CD4-positive, alpha-beta memory T cell (primary cell): ENCODE measurements at regions of chr1 and their contacts with region 1.

Region 1: DNA sequence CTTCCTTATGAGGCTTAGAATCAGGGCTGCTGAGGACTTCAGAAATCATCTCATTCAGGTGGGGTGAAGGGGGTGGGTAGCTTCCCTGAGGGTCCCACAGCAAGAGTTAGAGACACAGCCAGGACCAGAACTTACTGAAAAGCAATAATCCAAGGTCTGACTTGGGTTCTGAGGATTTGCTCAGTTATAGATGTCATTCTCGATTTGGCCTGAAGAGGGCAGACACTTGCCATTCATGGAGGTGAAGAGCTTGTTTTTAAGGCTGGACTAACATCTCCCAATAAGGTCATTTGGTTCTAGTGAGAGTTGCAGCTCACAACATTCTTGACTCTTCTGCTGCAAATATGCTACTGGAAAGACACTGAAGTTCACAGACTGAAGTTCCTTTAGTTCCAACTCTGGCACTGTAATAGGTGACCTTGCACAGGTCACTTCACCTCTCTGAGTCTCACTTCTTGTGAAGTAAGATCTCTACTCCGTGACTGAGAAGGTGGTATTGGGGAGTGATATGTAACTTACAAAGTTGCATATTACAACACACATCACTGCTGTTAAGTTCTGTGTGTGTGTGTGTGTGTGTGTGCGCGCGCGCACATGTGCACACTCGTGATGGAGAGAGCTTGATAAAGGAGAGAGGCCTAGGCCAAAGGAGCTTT is 69.8 kb upstream of the DIRAS3 start:
- DNase-seq: peak in 4 of 5 donors; percentile 8 to 17 (median 16)
- H3K4me3 ChIP-seq: no peak overlapping the region
- H3K4me3 Mint-ChIP-seq: no peak overlapping the region
- H3K27ac ChIP-seq: no peak overlapping the region
- H3K27ac Mint-ChIP-seq: no peak overlapping the region
- H3K4me1 ChIP-seq: no peaks in the 10 kb centered on the region
- H3K4me1 Mint-ChIP-seq: peaks cover 3 to 9% (median 5%) of the 10 kb centered on the region in 4 donors
- H3K27me3 ChIP-seq: no peaks in the 10 kb centered on the region
- H3K27me3 Mint-ChIP-seq: peaks cover 0 to 7% of the 10 kb centered on the region in 2 donors

Region 2: GRCh38 chr1:67991546-67991945 is 128.7 kb before region 1 on chr1:
- CTCF ChIA-PET with region 1: no interaction called
- POLR2A ChIA-PET with region 1: no interaction called
- intact Hi-C with region 1: no loop called
- DNase-seq: no peak
- H3K4me3 ChIP-seq: no peak overlapping the region
- H3K4me3 Mint-ChIP-seq: no peak overlapping the region
- H3K27ac ChIP-seq: no peak overlapping the region
- H3K27ac Mint-ChIP-seq: no peak overlapping the region
- H3K4me1 ChIP-seq: no peaks in the 10 kb centered on the region
- H3K4me1 Mint-ChIP-seq: no peaks in the 10 kb centered on the region
- H3K27me3 ChIP-seq: no peaks in the 10 kb centered on the region
- H3K27me3 Mint-ChIP-seq: peaks cover 0 to 4% of the 10 kb centered on the region in 2 donors

Region 3: DNA sequence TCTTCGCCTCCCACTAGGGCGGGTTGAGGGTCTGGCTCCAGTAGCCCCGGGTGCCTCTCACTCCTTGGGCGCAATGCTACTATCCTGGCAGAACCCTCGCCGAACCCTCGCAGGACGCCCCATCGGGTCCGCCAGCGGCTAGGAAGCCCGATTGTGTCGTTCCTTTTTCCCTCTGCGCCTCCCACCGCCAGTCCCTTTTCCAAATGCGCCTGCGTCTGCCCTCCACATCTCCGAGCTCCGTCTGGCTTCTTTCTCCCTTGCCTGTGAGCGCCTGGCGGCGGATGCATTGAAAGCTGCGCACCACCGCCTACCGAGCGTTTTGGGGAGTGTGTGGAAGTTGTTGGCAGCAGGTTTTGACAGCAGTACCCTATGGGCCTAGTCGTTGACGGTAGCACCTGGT is 68.8 kb before region 1 on chr1:
- CTCF ChIA-PET with region 1: no interaction called
- POLR2A ChIA-PET with region 1: no interaction called
- intact Hi-C with region 1: no loop called
- DNase-seq: no peak
- H3K4me3 ChIP-seq: no peak overlapping the region
- H3K4me3 Mint-ChIP-seq: no peak overlapping the region
- H3K27ac ChIP-seq: no peak overlapping the region
- H3K27ac Mint-ChIP-seq: no peak overlapping the region
- H3K4me1 ChIP-seq: no peaks in the 10 kb centered on the region
- H3K4me1 Mint-ChIP-seq: peaks cover 0 to 11% (median 1%) of the 10 kb centered on the region in 4 donors
- H3K27me3 ChIP-seq: no peaks in the 10 kb centered on the region
- H3K27me3 Mint-ChIP-seq: peaks cover 4 to 10% of the 10 kb centered on the region in 2 donors

Region 4: GRCh38 chr1:68093737-68094136 is 26.5 kb before region 1 on chr1:
- CTCF ChIA-PET with region 1: interaction called, 13 read pairs
- POLR2A ChIA-PET with region 1: no interaction called
- intact Hi-C with region 1: no loop called
- DNase-seq: no peak
- H3K4me3 ChIP-seq: no peak overlapping the region
- H3K4me3 Mint-ChIP-seq: no peak overlapping the region
- H3K27ac ChIP-seq: no peak overlapping the region
- H3K27ac Mint-ChIP-seq: no peak overlapping the region
- H3K4me1 ChIP-seq: no peaks in the 10 kb centered on the region
- H3K4me1 Mint-ChIP-seq: no peaks in the 10 kb centered on the region
- H3K27me3 ChIP-seq: no peaks in the 10 kb centered on the region
- H3K27me3 Mint-ChIP-seq: peaks cover 0 to 1% of the 10 kb centered on the region in 2 donors

Region 5: DNA sequence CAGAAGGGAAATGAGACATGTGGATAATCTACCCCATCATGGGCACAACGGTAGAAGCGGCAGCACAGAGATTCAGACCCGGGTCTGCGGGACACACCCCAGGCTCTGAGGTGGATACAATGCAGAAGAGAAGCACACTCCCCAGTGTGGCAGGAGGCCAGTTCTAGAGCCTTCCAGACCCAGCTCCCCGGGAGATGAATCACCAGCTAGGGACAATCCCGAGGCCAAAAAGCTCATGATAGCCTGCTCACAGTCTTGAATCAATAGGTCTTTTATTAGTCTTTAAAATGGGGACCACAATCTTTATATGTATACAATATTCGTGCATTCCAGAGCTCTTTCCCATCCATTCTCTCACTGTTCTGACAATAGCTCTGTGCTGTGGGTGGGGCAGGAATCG is 12.5 kb before region 1 on chr1:
- CTCF ChIA-PET with region 1: interaction called, 42 read pairs
- POLR2A ChIA-PET with region 1: no interaction called
- intact Hi-C with region 1: no loop called
- DNase-seq: no peak
- H3K4me3 ChIP-seq: no peak overlapping the region
- H3K4me3 Mint-ChIP-seq: no peak overlapping the region
- H3K27ac ChIP-seq: no peak overlapping the region
- H3K27ac Mint-ChIP-seq: no peak overlapping the region
- H3K4me1 ChIP-seq: no peaks in the 10 kb centered on the region
- H3K4me1 Mint-ChIP-seq: no peaks in the 10 kb centered on the region
- H3K27me3 ChIP-seq: no peaks in the 10 kb centered on the region
- H3K27me3 Mint-ChIP-seq: peaks cover 5 to 9% of the 10 kb centered on the region in 2 donors